ENCODE measurements at regions of chr1 and their contacts with region 1.

Region 1: GRCh38 chr1:231528172-231529029 is at the start of gene TSNAX:
- DNase-seq: peak; percentile 90
- H3K4me3 ChIP-seq: peak within 1 kb of the TSS; percentile 75 to 86 (median 81)
- H3K27ac ChIP-seq: peak within 1 kb of the TSS; percentile 84
- H3K4me1 ChIP-seq: peaks cover 12% of the 10 kb centered on the region
- H3K27me3 ChIP-seq: no peaks in the 10 kb centered on the region
- CTCF ChIP-seq: no peak
- total RNA-seq, gene TSNAX: 30.8 to 35.8 TPM

Region 2: DNA sequence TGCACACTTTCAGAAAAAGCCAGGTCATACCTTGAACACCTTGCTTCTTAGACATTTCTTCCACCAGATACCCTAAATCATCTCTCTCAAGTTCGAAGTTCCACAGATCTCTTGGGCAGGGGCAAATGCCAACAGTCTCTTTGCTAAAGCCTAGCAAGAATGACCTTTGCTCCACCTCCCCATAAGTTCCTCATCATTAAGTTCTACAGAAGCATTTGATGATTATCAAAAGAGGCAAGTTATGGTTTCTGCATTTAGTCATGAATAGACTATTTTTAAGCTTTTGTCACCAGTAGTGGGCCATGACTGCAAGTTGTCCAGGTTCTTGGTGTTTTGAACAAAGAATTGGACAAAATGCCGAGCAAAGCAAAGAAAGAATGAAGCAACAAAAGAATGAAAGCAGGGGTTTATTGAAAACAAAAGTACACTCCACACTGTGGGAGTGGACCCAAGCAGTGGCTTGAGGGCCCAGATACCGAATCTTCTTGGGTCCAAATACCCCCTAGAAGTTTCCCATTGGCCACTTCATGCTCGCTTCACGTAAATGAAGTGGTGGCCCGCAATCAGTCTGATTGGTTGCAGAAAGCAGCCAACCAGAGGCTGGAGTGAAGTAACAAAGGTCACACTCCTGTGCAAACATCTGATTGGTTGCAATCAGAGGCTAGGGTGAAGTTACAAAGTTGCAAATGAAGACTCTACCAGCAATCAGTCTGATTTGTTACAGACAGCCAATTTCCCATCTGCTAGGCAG is 96.6 kb before region 1 on chr1:
- CTCF ChIA-PET with region 1: no interaction called
- dilution Hi-C with region 1: loop called (anchors 5 kb)
- in situ Hi-C with region 1: no loop called
- intact Hi-C with region 1: no loop called
- DNase-seq: no peak
- H3K4me3 ChIP-seq: no peak overlapping the region
- H3K27ac ChIP-seq: no peak overlapping the region
- H3K4me1 ChIP-seq: no peaks in the 10 kb centered on the region
- H3K27me3 ChIP-seq: no peaks in the 10 kb centered on the region
- CTCF ChIP-seq: no peak

Region 3: GRCh38 chr1:231691618-231692259 is 163.3 kb after region 1 on chr1:
- CTCF ChIA-PET with region 1: no interaction called
- dilution Hi-C with region 1: no loop called
- in situ Hi-C with region 1: no loop called
- intact Hi-C with region 1: no loop called
- DNase-seq: peak; percentile 21
- H3K4me3 ChIP-seq: no peak overlapping the region
- H3K27ac ChIP-seq: no peak overlapping the region
- H3K4me1 ChIP-seq: no peaks in the 10 kb centered on the region
- H3K27me3 ChIP-seq: no peaks in the 10 kb centered on the region
- CTCF ChIP-seq: peak; percentile 67 to 71